ENCODE measurements at regions of chr10 and their contacts with region 1.

Region 1: DNA sequence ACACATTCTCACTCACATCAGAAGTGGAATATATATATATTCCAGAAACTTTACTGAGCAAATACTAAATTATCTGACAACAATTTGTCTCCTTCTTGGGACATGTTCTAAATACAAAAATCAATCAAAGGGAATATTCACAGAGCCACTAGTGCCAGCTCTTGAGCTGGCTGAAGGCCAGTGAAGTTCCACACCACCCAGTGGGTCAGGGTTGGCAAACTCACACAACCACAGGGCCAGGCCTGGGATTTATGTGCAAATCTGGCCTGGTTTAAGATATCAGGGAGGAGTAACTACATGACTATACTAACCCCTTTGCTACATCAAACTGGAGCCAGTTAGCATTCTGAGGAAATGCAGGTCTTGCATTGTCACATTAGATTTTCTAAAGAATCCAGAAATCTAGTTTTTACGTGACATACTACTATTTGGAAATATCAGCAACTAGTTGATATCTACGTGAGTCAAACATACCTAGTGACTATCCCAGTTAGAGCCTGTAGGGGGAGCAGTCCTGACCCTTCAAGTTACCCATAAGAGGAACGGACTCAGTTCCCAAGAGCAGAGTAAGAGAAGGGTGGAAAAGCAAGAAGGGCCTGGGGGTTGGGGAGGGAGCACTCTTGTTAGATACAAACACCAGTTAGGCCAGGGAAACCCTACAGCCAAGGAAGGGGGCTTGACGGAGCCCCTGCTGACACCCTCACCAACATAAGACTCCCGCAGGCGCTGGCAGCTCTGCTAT is 600.4 kb downstream of the KCNMA1 start:
- DNase-seq: no peak
- ATAC-seq: no peak
- H3K4me3 ChIP-seq: no peak overlapping the region
- H3K27ac ChIP-seq: no peak overlapping the region
- H3K4me1 ChIP-seq: peaks cover 0 to 13% (median 0%) of the 10 kb centered on the region in 9 donors
- H3K27me3 ChIP-seq: peaks cover 0 to 29% (median 8%) of the 10 kb centered on the region in 7 donors
- CTCF ChIP-seq: peak in 7 of 9 donors; percentile 32 to 54 (median 44)

Region 2: DNA sequence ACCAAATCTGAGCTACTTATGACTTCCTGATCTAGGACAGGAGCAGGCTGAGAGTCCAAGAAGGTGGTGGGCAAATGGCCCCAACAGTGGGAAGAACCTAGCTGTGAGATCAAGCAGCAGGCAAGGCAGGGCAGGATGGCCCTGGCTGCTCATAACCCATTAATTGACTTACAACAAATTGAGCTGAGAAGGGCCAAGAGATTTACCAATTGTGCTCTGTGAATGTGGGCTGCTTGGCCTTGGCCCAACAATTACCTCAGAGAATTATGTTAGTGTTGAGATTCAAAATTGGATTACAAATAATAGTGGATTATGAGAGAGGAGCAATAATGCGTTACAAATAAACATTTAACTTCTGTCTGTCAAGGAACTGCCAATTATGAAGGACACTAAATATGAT is 356.0 kb before region 1 on chr10:
- intact Hi-C with region 1: no loop called
- DNase-seq: no peak
- ATAC-seq: no peak
- H3K4me3 ChIP-seq: no peak overlapping the region
- H3K27ac ChIP-seq: no peak overlapping the region
- H3K4me1 ChIP-seq: peaks cover 0 to 7% (median 0%) of the 10 kb centered on the region in 9 donors
- H3K27me3 ChIP-seq: no peaks in the 10 kb centered on the region
- CTCF ChIP-seq: no peak

Region 3: GRCh38 chr10:77101341-77101740 is 64.2 kb after region 1 on chr10:
- intact Hi-C with region 1: no loop called
- DNase-seq: no peak
- ATAC-seq: no peak
- H3K4me3 ChIP-seq: no peak overlapping the region
- H3K27ac ChIP-seq: no peak overlapping the region
- H3K4me1 ChIP-seq: peaks cover 0 to 17% (median 5%) of the 10 kb centered on the region in 9 donors
- H3K27me3 ChIP-seq: peaks cover 0 to 6% (median 5%) of the 10 kb centered on the region in 7 donors
- CTCF ChIP-seq: no peak

Region 4: GRCh38 chr10:77111611-77112550 is 74.7 kb after region 1 on chr10:
- intact Hi-C with region 1: loop called in 1 of 10 experiments (anchors 5 kb)
- DNase-seq: no peak
- ATAC-seq: peak in 6 of 8 donors; percentile 55 to 74 (median 70)
- H3K4me3 ChIP-seq: no peak overlapping the region
- H3K27ac ChIP-seq: no peak overlapping the region
- H3K4me1 ChIP-seq: peaks cover 0 to 12% (median 0%) of the 10 kb centered on the region in 9 donors
- H3K27me3 ChIP-seq: peaks cover 0 to 23% (median 0%) of the 10 kb centered on the region in 7 donors
- CTCF ChIP-seq: peak; percentile 65 to 86 (median 81)

Region 5: GRCh38 chr10:77479586-77479985 is 442.4 kb after region 1 on chr10:
- intact Hi-C with region 1: no loop called
- DNase-seq: no peak
- ATAC-seq: no peak
- H3K4me3 ChIP-seq: no peak overlapping the region
- H3K27ac ChIP-seq: no peak overlapping the region
- H3K4me1 ChIP-seq: no peaks in the 10 kb centered on the region
- H3K27me3 ChIP-seq: peaks cover 0 to 5% (median 0%) of the 10 kb centered on the region in 7 donors
- CTCF ChIP-seq: no peak